Left colon (tissue), 2 donors: ENCODE measurements at regions of chr4 and their contacts with region 1.

Region 1: GRCh38 chr4:184538023-184538599 is 63.8 kb upstream of the IRF2 start:
- DNase-seq: peak; percentile 85 to 88
- ATAC-seq: peak; percentile 88

Region 2: DNA sequence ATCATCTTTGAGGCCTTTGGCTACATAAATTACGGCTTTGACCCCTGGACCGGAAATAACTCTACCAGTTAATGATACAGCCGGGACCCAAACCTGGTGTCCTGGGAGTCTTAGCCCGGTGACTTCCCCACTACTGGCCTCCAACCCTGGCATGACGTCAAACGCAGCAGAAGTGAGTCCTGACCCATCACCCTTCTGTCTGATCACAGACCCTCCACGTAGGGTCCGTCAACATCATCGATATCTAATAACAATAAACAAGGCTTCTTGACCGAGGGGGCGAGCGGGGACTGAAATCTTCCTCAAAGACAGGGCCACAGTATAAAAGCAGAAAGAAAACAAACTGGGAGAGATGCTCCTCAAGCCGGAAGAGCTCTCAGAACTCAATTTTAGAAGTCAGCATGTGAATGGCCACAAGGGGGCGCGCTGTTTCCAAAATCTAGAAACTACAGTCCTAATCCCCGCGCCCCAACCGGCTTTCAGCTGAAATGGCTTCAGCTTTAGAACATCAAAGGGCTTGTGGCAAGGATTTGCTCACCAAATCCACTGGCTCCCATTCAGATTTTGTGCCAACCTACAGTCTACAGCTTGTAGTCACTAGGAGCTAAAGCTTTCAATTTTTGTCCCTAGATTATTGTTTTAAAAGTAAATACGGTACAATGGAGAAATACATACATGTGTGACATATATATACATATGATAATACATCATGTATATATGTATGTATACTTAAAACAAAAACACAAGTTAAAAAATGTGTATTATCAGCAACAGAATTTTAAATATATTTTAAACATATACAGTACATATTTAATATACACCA is 274.0 kb before region 1 on chr4:
- intact Hi-C with region 1: loop called in 1 of 2 experiments (anchors 5 kb)
- DNase-seq: peak; percentile 89 to 98
- ATAC-seq: peak; percentile 81

Region 3: GRCh38 chr4:184287697-184288255 is 250.3 kb before region 1 on chr4:
- intact Hi-C with region 1: loop called in 1 of 2 experiments (anchors 5 kb)
- DNase-seq: peak in 1 of 2 donors; percentile 40
- ATAC-seq: peak; percentile 66

Region 4: DNA sequence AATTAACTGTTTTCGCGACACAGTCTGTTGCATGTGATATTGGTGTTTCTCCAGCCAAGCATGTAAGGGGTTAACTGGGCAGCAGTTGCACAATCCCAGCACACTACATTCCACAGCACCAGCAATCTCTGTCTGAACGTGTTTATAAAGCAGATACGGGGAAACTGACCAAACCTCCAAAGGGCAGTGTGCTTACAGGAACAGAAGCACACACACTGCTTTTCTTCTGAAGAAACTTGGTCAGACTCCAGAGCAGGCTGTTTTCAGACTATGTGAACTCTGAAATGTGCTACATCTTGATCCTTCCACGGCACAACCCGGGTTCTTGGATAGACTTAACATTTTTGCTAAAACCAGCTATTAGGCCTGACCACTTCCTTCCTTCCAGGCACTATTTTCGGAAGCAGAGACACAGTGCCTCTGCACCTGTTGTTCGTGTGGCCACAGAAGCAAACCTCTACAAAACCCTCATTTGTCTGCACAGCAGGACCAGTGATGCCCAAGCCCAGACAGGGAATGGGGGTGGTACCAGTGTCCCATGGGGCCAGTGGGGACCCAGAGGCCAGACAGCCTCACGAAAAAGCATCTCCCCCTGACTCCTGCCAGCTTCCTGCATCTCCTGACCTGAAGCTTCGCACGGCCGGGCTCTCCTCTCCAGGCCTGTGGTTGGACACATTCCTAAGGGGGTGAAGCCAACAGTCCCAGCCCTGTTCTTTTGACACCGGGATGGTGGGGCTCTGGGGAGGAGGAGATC is 153.9 kb before region 1 on chr4:
- intact Hi-C with region 1: loop called in 1 of 2 experiments (anchors 10 kb)
- DNase-seq: peak in 1 of 2 donors; percentile 33
- ATAC-seq: no peak